ENCODE measurements at regions of chr5 and their contacts with region 1.

Region 1: GRCh38 chr5:164504141-164504772 is 998.8 kb downstream of the MAT2B start:
- DNase-seq: peak; percentile 13 to 68 (median 46)
- H3K4me3 ChIP-seq: no peak overlapping the region
- H3K27ac ChIP-seq: no peak overlapping the region
- H3K4me1 ChIP-seq: peaks cover 0 to 3% of the 10 kb centered on the region in 2 donors
- H3K27me3 ChIP-seq: no peaks in the 10 kb centered on the region
- CTCF ChIP-seq: peak; percentile 70 to 88 (median 82)
- POLR2A ChIP-seq: no peak

Region 2: GRCh38 chr5:163564321-163564938 is 939.8 kb before region 1 on chr5:
- intact Hi-C with region 1: loop called in 1 of 2 experiments (anchors 10 kb)
- DNase-seq: peak; percentile 40 to 87 (median 64)
- H3K4me3 ChIP-seq: no peak overlapping the region
- H3K27ac ChIP-seq: no peak overlapping the region
- H3K4me1 ChIP-seq: peaks cover 7 to 17% of the 10 kb centered on the region in 2 donors
- H3K27me3 ChIP-seq: peaks cover 12% of the 10 kb centered on the region
- CTCF ChIP-seq: peak; percentile 80 to 90 (median 85)
- POLR2A ChIP-seq: no peak

Region 3: DNA sequence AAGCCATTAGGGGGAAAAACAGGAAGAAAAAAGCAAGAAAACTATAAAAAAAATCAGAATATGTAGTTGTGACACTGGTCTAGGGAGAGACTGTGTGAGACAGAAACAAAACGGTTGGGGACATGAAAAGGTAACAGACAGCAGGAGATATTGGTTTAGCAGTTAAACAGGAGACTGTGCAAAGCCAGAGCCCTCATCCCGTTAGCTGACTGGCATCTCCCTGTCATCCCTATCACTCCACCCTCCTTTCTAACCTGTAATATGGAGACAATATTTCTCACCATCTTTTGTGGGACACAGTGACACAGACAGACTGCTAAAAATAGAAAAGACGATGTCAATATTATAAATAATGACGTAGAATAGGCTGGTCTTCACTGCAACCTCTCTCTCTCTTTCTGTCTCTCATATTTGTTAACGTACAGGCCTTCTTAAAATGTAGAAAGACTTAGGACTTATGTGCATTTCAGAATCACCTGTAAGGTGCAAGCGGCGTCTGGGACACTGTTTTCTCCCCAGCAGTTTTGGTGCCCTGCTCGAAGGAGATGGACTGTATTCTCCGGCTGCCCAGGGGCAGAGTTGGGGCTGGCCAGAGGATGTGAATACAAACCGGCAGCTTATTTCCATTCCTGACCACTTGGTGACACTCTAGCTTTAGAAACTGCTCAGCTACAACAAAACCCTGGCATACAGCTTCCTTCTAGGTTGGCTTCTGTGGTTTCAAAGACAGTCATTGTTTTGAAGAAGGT is 808.3 kb before region 1 on chr5:
- intact Hi-C with region 1: loop called in 1 of 2 experiments (anchors 10 kb)
- DNase-seq: peak; percentile 18 to 66 (median 29)
- H3K4me3 ChIP-seq: no peak overlapping the region
- H3K27ac ChIP-seq: no peak overlapping the region
- H3K4me1 ChIP-seq: no peaks in the 10 kb centered on the region
- H3K27me3 ChIP-seq: no peaks in the 10 kb centered on the region
- CTCF ChIP-seq: peak; percentile 19 to 69 (median 54)
- POLR2A ChIP-seq: no peak

Region 4: GRCh38 chr5:164013077-164013670 is 491.1 kb before region 1 on chr5:
- intact Hi-C with region 1: loop called (anchors 5 to 10 kb)
- DNase-seq: peak; percentile 36 to 82 (median 62)
- H3K4me3 ChIP-seq: no peak overlapping the region
- H3K27ac ChIP-seq: no peak overlapping the region
- H3K4me1 ChIP-seq: no peaks in the 10 kb centered on the region
- H3K27me3 ChIP-seq: no peaks in the 10 kb centered on the region
- CTCF ChIP-seq: peak; percentile 47 to 82 (median 74)
- POLR2A ChIP-seq: no peak

Region 5: DNA sequence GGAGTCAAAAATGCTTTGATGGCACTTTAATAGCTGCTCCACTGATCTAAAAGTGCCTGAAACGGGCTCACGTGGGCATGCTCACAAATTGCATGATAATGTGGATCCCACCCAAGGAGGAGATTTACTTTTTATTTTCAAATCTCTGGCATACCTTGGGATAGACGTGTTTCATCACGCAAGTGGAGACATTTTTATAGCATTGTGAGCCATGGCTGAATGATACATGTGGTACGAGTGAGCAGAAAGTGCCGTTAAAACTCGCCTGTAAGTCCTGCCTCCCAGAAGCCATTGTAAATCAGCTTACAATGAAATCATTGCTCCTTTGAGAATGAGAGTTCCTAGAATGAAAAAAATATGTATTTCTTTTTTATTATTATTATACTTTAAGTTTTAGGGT is 484.1 kb before region 1 on chr5:
- intact Hi-C with region 1: loop called (anchors 5 to 10 kb)
- DNase-seq: no peak
- H3K4me3 ChIP-seq: no peak overlapping the region
- H3K27ac ChIP-seq: no peak overlapping the region
- H3K4me1 ChIP-seq: no peaks in the 10 kb centered on the region
- H3K27me3 ChIP-seq: no peaks in the 10 kb centered on the region
- CTCF ChIP-seq: no peak
- POLR2A ChIP-seq: no peak

Region 6: DNA sequence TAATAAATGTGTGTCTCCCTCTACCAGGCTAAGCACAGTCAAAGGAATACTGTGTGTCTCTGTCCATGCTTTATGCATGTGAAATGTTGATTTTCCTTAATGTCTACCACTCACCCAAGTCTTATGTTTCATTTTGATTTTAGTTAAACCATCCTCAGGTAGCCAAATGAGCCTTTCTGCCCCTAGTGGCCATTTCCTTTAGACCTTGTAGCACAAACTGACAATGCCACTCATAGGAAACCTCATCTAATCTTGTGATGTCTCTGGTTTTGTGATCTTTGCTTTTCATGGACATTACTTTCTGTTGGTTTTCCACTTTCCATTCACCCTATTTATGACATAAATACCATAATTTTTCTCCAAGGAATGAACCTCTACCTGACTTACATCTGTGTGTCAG is 178.0 kb before region 1 on chr5:
- intact Hi-C with region 1: no loop called
- DNase-seq: no peak
- H3K4me3 ChIP-seq: no peak overlapping the region
- H3K27ac ChIP-seq: no peak overlapping the region
- H3K4me1 ChIP-seq: no peaks in the 10 kb centered on the region
- H3K27me3 ChIP-seq: no peaks in the 10 kb centered on the region
- CTCF ChIP-seq: no peak
- POLR2A ChIP-seq: no peak